ENCODE measurements at regions of chr12 and their contacts with region 1.

Region 1: GRCh38 chr12:116241157-116241772 is 36.2 kb downstream of the MED13L start:
- DNase-seq: no peak
- H3K4me3 ChIP-seq: no peak overlapping the region
- H3K27ac ChIP-seq: no peak overlapping the region
- H3K4me1 ChIP-seq: peaks cover 60% of the 10 kb centered on the region
- H3K27me3 ChIP-seq: no peaks in the 10 kb centered on the region
- CTCF ChIP-seq: no peak

Region 2: DNA sequence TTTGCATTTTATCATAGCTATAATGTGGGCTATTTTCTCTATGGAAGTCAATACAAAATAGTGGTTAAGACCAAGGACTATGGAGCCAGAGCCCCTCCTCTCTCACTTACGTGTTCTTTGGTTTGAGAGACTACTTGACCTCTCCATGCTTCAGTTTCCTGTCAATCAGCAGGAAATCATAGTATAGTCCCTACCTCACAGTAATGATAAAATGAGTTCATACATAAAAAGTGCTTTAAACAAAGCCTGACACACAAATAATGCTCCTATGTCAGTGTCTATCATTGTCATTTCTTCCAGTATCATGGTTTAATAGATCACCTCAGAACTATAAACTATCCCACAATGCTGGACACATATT is 54.1 kb before region 1 on chr12:
- CTCF ChIA-PET with region 1: no interaction called
- POLR2A ChIA-PET with region 1: interaction called, 13 read pairs
- intact Hi-C with region 1: no loop called
- DNase-seq: peak; percentile 54
- H3K4me3 ChIP-seq: peak overlapping the region; percentile 24
- H3K27ac ChIP-seq: peak overlapping the region; percentile 62
- H3K4me1 ChIP-seq: peaks cover 62% of the 10 kb centered on the region
- H3K27me3 ChIP-seq: no peaks in the 10 kb centered on the region
- CTCF ChIP-seq: no peak